ENCODE measurements at regions of chr14 and their contacts with region 1.

Region 1: DNA sequence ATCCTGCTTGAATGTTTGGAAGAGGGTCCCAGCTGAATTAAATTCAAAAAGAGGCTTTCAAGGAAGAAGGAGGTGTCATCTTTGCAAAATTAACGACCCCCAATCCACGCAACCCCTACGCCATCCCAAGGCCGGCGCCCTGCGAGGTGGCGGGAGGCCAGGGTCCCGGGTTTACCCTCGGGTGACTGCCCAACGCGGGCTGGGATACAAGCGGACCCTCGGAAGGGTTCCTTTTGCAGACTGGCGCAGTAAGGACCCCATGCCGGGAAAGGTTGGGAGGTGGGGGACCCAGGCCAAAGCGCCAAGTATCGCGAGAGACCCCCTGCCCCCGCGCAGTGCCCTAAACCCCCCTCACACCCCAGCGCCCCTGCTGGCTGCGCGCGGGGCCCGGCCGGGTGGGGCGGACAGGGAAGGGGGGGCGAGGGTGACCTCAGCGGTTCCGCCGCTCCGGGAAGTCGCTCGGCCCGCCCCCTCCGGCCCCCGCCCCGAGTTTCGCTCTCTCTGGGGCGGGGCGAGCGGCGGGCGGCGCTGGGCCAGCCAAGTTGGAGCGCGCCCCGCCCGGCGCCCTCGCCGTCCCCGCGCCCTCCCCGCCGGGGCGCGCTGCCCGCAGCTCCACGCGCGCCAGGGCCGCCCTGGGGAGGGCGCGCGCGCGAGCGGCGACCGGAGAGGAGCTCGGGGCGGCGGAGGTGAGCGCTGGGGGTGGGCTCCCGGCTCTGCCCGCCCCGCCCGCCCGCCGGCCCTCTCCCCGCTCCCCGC is 708 bp upstream of the ZBTB42 start:
- DNase-seq: no peak
- H3K4me3 ChIP-seq: peak overlapping the region; percentile 64
- CTCF ChIP-seq: peak; percentile 76

Region 2: GRCh38 chr14:104820669-104821228 is 20.6 kb after region 1 on chr14:
- CTCF ChIA-PET with region 1: interaction called, 18 read pairs
- POLR2A ChIA-PET with region 1: no interaction called
- DNase-seq: no peak
- H3K4me3 ChIP-seq: no peak overlapping the region
- CTCF ChIP-seq: peak; percentile 90